ENCODE measurements at regions of chr3 and their contacts with region 1.

Region 1: DNA sequence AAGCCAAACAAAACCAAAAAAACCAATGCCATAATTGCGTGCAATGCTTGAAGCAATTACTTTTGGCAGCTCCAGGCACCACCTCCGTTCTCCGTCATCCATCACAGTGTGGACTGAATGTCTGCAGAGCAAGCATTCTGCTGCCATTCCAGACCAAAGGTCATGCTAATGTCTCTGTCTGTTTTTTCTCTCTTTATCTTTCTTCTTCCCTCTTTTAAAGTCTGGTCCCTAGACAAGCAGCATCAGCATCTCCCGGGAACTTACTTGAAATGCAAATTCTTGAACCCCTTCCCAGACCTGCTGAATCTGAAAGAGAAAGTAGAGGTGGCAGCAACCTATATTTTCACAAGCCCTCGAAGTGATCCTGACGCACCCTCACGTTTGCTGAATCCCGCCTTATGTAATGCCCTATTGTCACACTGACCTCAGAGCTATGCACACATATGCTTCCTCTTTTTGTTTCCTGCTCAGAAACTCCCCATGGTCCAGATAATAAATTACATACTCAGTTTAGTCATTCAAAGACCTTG is 297.3 kb upstream of the PROK2 start:
- DNase-seq: no peak
- ATAC-seq: no peak
- H3K4me3 ChIP-seq: no peak overlapping the region
- H3K27ac ChIP-seq: no peak overlapping the region
- H3K4me1 ChIP-seq: peaks cover 24 to 47% of the 10 kb centered on the region in 2 experiments
- H3K27me3 ChIP-seq: no peaks in the 10 kb centered on the region
- CTCF ChIP-seq: no peak
- EP300 ChIP-seq: no peak
- POLR2A ChIP-seq: no peak
- RAD21 ChIP-seq: no peak

Region 2: DNA sequence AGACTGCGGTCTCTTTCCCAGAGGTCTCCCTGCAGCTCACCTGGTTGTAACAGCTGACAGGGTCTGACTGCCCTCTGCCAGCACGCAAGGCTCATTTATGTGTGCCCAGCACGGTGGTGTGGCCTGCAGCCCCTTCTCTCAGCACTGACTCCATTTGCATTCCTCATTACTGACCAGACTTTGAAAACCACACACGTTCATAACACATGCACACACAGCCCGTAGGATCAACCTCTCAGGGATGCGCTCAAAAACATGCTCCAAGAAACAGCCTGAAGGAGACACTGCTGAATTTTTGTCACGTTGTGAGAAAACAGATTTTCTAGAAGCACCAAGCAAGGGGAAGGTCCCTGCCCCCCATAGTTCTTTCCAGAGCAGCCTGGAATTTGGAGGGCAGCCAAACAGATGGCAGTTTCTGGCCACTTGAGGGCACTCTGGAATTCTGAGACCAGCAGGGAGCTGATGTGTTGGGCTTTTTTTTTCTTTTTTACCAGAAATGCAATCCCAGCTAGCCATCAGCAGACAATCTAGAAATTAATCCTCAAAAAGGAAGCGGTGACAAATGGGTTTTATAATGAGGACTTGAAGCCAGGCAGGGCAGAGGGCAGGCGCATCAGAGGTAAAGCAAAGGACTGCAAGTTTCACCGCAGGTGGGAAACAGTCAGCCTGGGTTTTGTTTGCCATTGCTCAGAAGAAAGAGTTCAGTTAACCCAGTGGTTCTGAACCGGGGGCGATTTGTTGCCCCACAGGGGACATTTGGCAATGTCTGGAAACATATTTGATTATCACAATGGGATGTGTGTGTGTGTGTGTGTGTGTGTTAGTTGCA is 126.8 kb before region 1 on chr3:
- CTCF ChIA-PET with region 1: no interaction called
- POLR2A ChIA-PET with region 1: no interaction called
- in situ Hi-C with region 1: no loop called
- intact Hi-C with region 1: loop called (anchors 10 kb)
- DNase-seq: peak; percentile 21 to 66 (median 35)
- ATAC-seq: peak; percentile 64
- H3K4me3 ChIP-seq: no peak overlapping the region
- H3K27ac ChIP-seq: no peak overlapping the region
- H3K4me1 ChIP-seq: peaks cover 0 to 5% of the 10 kb centered on the region in 2 experiments; a peak in 2 of 5 replicates
- H3K27me3 ChIP-seq: peaks cover 0 to 6% of the 10 kb centered on the region in 2 experiments; a peak in 2 of 5 replicates
- CTCF ChIP-seq: peak; percentile 60 to 71 (median 63)
- EP300 ChIP-seq: peak; percentile 46
- POLR2A ChIP-seq: no peak
- RAD21 ChIP-seq: peak; percentile 68 to 80

Region 3: GRCh38 chr3:72009851-72010443 is 72.3 kb before region 1 on chr3:
- CTCF ChIA-PET with region 1: no interaction called
- POLR2A ChIA-PET with region 1: no interaction called
- in situ Hi-C with region 1: no loop called
- intact Hi-C with region 1: loop called (anchors 10 kb)
- DNase-seq: no peak
- ATAC-seq: no peak
- H3K4me3 ChIP-seq: no peak overlapping the region
- H3K27ac ChIP-seq: no peak overlapping the region
- H3K4me1 ChIP-seq: peaks cover 0 to 31% of the 10 kb centered on the region in 2 experiments; a peak in 4 of 5 replicates
- H3K27me3 ChIP-seq: no peaks in the 10 kb centered on the region
- CTCF ChIP-seq: no peak
- EP300 ChIP-seq: no peak
- POLR2A ChIP-seq: no peak
- RAD21 ChIP-seq: no peak

Region 4: GRCh38 chr3:72144773-72145505 is 62.7 kb after region 1 on chr3:
- CTCF ChIA-PET with region 1: no interaction called
- POLR2A ChIA-PET with region 1: no interaction called
- in situ Hi-C with region 1: no loop called
- intact Hi-C with region 1: loop called (anchors 2 kb)
- DNase-seq: peak; percentile 74 to 93 (median 86)
- ATAC-seq: peak; percentile 88
- H3K4me3 ChIP-seq: no peak overlapping the region
- H3K27ac ChIP-seq: peak overlapping the region; percentile 70
- H3K4me1 ChIP-seq: peaks cover 5 to 45% of the 10 kb centered on the region in 2 experiments; a peak in 4 of 5 replicates
- H3K27me3 ChIP-seq: no peaks in the 10 kb centered on the region
- CTCF ChIP-seq: no peak
- EP300 ChIP-seq: peak; percentile 100
- POLR2A ChIP-seq: no peak
- RAD21 ChIP-seq: peak; percentile 25 to 57

Region 5: GRCh38 chr3:72163809-72164634 is 81.8 kb after region 1 on chr3:
- CTCF ChIA-PET with region 1: no interaction called
- POLR2A ChIA-PET with region 1: no interaction called
- in situ Hi-C with region 1: no loop called
- intact Hi-C with region 1: loop called (anchors 5 kb)
- DNase-seq: peak; percentile 69 to 89 (median 76)
- ATAC-seq: peak; percentile 92
- H3K4me3 ChIP-seq: no peak overlapping the region
- H3K27ac ChIP-seq: peak overlapping the region; percentile 77; the same call in 1 of the 3 replicates
- H3K4me1 ChIP-seq: peaks cover 18 to 42% of the 10 kb centered on the region in 2 experiments; a peak in 4 of 5 replicates
- H3K27me3 ChIP-seq: no peaks in the 10 kb centered on the region
- CTCF ChIP-seq: no peak
- EP300 ChIP-seq: peak; percentile 96
- POLR2A ChIP-seq: no peak
- RAD21 ChIP-seq: peak; percentile 7 to 44; a peak in 3 of 4 replicates

Region 6: DNA sequence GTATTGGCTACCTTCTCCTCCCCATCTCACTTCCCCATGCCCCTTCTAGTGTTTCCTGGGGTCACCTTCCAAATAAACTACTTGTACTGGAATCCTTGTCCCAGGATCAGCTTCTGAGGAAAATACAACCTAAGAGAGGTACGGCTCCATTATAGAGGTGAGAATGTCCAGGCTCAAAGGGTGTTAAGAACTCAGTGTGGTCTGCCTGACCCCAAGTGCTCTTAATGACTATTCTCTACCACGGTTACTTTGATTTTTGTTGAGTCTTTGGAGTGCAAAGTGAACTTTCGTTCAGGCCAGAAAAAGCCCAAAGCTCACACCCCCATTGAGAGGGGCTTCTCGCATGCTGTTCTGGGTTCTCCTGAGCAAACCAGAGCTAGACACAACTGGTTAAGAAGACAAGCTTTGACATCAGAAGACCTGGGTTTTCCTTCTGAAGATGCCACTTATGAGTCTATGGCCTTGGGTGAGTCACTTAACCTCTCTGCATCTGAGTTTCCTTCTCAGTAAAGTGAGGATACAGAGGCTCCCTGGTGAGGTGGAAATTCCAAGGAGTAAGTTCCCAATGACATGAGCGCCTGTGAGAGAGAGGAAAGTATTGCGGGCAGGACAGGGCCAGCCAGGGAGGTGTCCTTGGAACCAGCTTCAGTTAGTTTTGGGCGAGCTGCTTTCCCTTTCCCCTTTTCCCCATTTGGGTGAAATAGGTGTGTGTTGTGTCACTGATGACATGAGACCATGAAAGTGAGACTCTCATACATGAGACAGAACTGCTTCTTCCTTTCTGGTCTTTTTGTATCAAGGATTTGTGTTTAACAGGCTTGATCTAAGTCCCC is 177.7 kb after region 1 on chr3:
- CTCF ChIA-PET with region 1: no interaction called
- POLR2A ChIA-PET with region 1: no interaction called
- in situ Hi-C with region 1: loop called (anchors 5 kb)
- intact Hi-C with region 1: loop called (anchors 5 kb)
- DNase-seq: no peak
- ATAC-seq: no peak
- H3K4me3 ChIP-seq: no peak overlapping the region
- H3K27ac ChIP-seq: no peak overlapping the region
- H3K4me1 ChIP-seq: peaks cover 8 to 9% of the 10 kb centered on the region in 2 experiments
- H3K27me3 ChIP-seq: no peaks in the 10 kb centered on the region
- CTCF ChIP-seq: no peak
- EP300 ChIP-seq: no peak
- POLR2A ChIP-seq: no peak
- RAD21 ChIP-seq: no peak